Head of caudate nucleus (tissue), 42 donors: ENCODE measurements at regions of chr21 and their contacts with region 1.

Region 1: DNA sequence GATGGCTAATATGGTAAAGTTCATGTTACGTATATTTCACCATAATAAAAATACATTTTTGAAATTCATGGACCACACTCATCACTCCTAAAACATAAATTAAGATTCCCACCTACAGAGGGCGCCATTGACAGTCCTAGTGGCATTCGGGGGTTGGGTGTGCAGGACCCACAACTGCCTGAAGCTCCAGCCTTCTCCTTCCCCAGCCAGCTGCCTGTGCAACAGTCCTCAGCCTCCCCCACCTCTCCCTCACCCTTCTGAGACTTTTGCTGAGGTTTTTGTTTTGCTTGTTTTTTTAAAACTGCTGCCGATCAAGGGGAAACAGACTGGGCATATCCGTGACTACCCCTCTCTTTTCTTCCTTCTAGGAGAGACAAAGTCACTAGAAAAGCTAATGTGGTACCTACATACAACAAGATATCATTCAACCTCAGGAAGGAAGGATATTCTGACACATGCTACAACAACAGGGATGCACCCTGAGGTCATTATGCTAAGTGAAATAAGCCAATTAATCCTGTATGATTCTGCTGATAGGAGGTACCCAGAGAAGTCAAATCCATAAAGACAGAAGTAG is 9.2 kb upstream of the EVA1C start:
- DNase-seq: peak in 39 of 42 donors; percentile 21 to 87 (median 66)

Region 2: DNA sequence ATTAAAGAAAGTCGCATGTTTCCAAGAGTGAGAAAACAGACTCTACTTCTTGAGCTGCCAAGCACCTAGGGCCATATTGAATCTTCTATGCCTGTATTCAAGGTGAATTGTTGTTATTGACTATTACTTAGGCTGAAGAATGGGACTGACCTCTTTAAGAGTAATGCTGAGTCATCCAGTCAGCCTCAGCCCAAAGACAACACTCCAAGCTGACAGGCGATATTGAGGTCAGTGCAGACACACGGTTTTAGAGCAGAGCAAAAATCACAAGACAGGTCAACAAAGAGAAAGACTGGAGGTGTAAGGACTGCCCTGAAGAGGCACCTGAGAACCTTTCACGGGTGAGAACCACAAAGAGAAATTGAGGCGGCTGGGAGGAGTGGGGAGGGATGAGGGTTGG is 271.3 kb before region 1 on chr21:
- intact Hi-C with region 1: no loop called
- DNase-seq: no peak

Region 3: GRCh38 chr21:32597205-32597604 is 193.9 kb after region 1 on chr21:
- intact Hi-C with region 1: loop called (anchors 5 kb)
- DNase-seq: peak in 2 of 42 donors; percentile 29 to 48